ENCODE measurements at regions of chr17 and their contacts with region 1.

Region 1: DNA sequence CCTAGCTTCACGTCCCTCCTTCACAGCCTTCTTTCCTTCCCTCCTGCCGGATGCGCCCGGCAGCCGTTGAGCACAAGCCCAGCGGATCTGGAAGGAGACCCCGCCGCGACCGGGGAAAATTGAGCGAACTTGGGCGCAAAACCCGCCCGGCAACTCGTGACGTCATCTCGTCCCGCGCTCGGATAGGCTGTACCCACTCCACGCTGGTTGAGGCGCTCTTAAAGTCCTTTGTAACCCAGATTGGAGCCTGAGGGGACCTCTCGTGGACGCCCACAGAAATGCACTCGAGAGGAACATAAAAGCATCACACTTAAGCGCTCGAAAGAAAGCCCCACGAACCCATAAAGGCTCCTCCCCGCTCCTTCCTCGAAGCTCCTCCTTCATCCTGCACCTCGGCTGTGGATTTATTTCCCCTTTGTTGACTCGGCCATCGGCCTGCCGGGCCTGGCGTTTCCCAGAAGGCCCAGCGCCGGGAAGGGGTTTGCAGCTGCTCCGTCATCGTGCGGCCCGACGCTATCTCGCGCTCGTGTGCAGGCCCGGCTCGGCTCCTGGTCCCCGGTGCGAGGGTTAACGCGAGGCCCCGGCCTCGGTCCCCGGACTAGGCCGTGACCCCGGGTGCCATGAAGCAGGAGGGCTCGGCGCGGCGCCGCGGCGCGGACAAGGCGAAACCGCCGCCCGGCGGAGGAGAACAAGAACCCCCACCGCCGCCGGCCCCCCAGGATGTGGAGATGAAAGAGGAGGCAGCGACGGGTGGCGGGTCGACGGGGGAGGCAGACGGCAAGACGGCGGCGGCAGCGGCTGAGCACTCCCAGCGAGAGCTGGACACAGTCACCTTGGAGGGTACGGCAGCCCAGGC is at the start of gene PSMD3:
- DNase-seq: peak; percentile 99
- H3K4me3 Mint-ChIP-seq: peak within 1 kb of the TSS; percentile 86
- H3K27ac Mint-ChIP-seq: peak within 1 kb of the TSS; percentile 93
- H3K4me1 Mint-ChIP-seq: peaks cover 33% of the 10 kb centered on the region
- H3K27me3 Mint-ChIP-seq: peaks cover 32% of the 10 kb centered on the region

Region 2: DNA sequence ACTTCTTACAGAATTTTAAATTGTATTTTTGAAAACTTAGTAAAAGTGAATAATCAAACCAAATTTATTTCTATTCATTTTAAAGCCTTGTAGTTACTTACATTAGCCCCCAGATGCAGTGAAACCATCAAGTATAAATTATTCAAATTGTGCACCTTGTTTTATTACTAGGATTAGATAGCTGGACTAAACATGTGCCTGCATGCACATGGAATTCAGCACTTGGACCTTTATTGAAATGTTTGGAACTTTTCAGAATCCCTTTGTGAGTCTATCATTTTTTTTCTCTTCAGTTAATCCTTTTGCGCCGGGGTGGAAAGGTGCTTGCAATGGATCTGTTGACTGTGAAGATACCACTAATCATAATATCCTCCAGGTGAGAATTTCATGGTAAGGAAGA is 107.8 kb before region 1 on chr17:
- CTCF ChIA-PET with region 1: interaction called, 31 read pairs
- DNase-seq: no peak
- H3K4me3 Mint-ChIP-seq: no peak overlapping the region
- H3K27ac Mint-ChIP-seq: no peak overlapping the region
- H3K4me1 Mint-ChIP-seq: peaks cover 16% of the 10 kb centered on the region
- H3K27me3 Mint-ChIP-seq: peaks cover 27% of the 10 kb centered on the region

Region 3: GRCh38 chr17:39939588-39940419 is 40.8 kb before region 1 on chr17:
- CTCF ChIA-PET with region 1: interaction called, 11 read pairs
- DNase-seq: peak; percentile 63
- H3K4me3 Mint-ChIP-seq: no peak overlapping the region
- H3K27ac Mint-ChIP-seq: peak overlapping the region; percentile 45
- H3K4me1 Mint-ChIP-seq: peaks cover 24% of the 10 kb centered on the region
- H3K27me3 Mint-ChIP-seq: peaks cover 41% of the 10 kb centered on the region

Region 4: GRCh38 chr17:39952680-39953470 is 27.7 kb before region 1 on chr17:
- CTCF ChIA-PET with region 1: interaction called, 53 read pairs
- DNase-seq: peak; percentile 99
- H3K4me3 Mint-ChIP-seq: peak overlapping the region; percentile 79
- H3K27ac Mint-ChIP-seq: peak overlapping the region; percentile 62
- H3K4me1 Mint-ChIP-seq: peaks cover 39% of the 10 kb centered on the region
- H3K27me3 Mint-ChIP-seq: peaks cover 50% of the 10 kb centered on the region